ENCODE measurements at regions of chr15 and their contacts with region 1.

Region 1: GRCh38 chr15:60179786-60180391 is 175.8 kb downstream of the FOXB1 start:
- DNase-seq: no peak
- H3K4me3 ChIP-seq: no peak overlapping the region
- H3K27ac ChIP-seq: no peak overlapping the region
- H3K4me1 ChIP-seq: no peaks in the 10 kb centered on the region
- H3K27me3 ChIP-seq: peaks cover 0 to 13% (median 0%) of the 10 kb centered on the region in 4 donors
- CTCF ChIP-seq: peak; percentile 50 to 74 (median 59)
- EP300 ChIP-seq: no peak
- POLR2A ChIP-seq: no peak

Region 2: DNA sequence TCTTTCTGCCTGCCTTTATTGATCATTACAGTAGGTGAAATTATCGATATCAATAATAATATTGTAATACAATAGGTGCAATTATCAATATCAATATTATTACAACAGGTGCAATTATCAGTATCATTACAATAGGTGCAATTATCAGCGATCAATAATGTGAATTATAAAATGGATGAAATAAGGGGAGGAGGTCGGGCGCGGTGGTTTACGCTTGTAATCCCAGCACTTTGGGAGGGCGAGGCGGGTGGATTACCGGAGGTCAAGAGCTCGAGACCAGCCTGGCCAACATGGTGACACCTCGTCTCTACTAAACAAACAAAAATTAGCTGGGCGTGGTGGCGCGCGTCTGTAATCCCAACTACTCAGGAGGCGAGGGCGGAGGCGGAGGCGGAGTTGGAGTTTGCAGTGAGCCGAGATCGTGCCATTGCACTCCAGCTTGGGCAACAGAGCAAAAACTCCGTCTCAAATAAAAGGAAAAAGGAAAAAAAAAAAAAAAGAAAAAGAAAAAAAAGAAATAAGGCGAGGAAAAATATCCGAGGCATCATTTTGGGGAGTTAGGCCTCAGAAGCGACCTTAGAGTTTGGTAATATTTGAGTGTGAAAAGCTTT is 490.2 kb before region 1 on chr15:
- intact Hi-C with region 1: loop called (anchors 10 kb)
- DNase-seq: peak; percentile 97
- H3K4me3 ChIP-seq: peak overlapping the region; percentile 84 to 96 (median 88)
- H3K27ac ChIP-seq: peak overlapping the region; percentile 96 to 99 (median 98)
- H3K4me1 ChIP-seq: peaks cover 35 to 48% (median 43%) of the 10 kb centered on the region in 4 donors
- H3K27me3 ChIP-seq: no peaks in the 10 kb centered on the region
- CTCF ChIP-seq: peak in 1 of 3 experiments; percentile 13
- EP300 ChIP-seq: no peak
- POLR2A ChIP-seq: no peak

Region 3: DNA sequence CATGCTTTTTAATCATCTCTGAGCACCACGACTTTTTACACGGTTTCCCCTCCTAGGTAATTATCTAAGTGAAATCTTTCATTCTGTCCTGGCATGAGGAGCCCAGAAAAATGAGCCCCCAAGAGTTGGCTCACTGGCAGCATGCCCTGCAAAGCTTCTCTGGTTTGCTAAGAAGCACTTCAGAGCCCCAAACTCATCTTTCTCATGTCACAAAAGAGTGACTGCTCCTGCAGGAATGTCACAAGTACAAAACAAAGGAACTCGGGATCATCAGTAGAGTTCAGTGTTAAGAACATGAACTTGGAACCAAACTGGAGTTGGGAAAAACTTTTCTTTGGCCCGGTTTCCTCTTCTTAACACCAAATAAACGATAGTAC is 51.9 kb before region 1 on chr15:
- intact Hi-C with region 1: loop called (anchors 10 kb)
- DNase-seq: peak; percentile 89
- H3K4me3 ChIP-seq: peak overlapping the region; percentile 54 to 62 (median 57)
- H3K27ac ChIP-seq: peak overlapping the region; percentile 61 to 81 (median 74)
- H3K4me1 ChIP-seq: peaks cover 0 to 15% (median 14%) of the 10 kb centered on the region in 4 donors
- H3K27me3 ChIP-seq: peaks cover 0 to 11% (median 0%) of the 10 kb centered on the region in 4 donors
- CTCF ChIP-seq: no peak
- EP300 ChIP-seq: no peak
- POLR2A ChIP-seq: no peak